ENCODE measurements at regions of chr17 and their contacts with region 1.

Region 1: DNA sequence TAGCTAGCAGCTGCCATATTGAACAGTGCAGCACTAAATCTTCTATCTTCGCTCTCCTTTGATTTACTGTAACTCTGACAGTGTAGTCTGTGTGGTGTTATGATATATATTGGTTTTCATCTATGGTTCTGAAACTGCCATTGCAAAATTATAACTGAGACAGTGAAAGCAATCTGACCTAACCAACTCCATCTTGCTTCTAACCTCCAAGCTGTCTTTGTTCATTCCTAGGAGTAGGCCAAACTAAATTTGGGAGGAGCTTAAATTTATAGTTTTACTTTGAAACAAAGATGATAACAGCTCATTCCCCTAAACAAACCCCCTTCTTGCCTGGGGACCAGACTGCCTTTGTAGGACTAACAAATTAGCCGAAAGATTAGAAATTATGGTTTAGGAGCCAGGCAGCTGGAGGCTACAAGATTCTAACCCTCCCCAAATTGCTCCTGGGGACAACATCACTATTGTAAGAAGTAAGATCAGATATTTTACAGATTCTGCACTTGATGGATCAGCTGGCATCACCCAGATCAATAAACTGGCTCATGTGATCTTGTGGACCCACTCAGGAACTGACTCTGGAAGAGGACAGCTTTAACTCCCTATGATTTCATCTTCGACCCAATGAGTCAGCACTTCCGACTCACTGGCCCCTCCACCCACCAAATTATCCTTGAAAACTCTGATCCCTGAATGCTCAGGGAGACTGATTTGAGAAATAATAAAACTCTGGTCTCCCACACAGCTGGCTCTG is 47.0 kb upstream of the FBXO47 start:
- DNase-seq: no peak
- ATAC-seq: no peak
- H3K4me3 ChIP-seq: no peak overlapping the region
- H3K27ac ChIP-seq: no peak overlapping the region
- H3K4me1 ChIP-seq: no peaks in the 10 kb centered on the region
- H3K27me3 ChIP-seq: no peaks in the 10 kb centered on the region

Region 2: GRCh38 chr17:39099663-39100286 is 85.6 kb after region 1 on chr17:
- intact Hi-C with region 1: loop called in 1 of 2 experiments (anchors 10 kb)
- DNase-seq: no peak
- ATAC-seq: no peak
- H3K4me3 ChIP-seq: no peak overlapping the region
- H3K27ac ChIP-seq: no peak overlapping the region
- H3K4me1 ChIP-seq: no peaks in the 10 kb centered on the region
- H3K27me3 ChIP-seq: no peaks in the 10 kb centered on the region

Region 3: DNA sequence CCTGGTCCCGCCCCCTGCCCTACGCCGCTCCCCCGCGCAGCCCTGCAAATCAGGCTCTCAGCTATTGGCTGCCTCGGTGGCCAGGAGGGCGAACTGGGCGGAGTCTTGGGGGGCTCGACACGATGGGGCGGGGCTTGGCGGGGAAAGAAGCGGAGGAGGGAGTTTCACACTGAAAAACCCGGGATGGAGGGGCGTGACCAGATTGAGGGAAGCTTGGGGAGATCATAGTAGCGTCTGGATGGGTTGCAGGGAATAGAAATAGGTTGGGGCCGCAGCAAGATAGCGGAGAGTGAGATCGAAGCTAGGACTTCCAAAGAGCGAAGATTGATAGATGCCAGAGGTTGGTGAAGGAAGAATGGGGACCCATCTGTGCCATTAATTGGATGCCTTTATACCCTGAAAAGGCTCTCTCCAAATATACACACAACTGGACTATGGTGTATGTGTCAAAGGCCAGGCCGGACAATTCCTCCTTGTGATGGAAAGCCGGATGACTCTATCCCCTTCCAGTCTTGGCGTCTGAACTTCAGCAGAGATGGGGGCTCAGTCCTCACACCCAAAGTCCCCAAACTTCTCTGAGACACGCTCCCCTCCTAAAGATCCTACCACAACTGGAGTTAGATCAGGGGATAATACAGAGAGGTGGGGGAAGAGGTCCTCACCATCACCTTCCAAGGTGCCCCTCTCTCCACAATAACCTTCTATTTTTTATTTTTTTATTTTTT is 211.9 kb after region 1 on chr17:
- intact Hi-C with region 1: no loop called
- DNase-seq: peak; percentile 92 to 97
- ATAC-seq: peak; percentile 85
- H3K4me3 ChIP-seq: peak overlapping the region; percentile 31 to 46
- H3K27ac ChIP-seq: no peak overlapping the region
- H3K4me1 ChIP-seq: no peaks in the 10 kb centered on the region
- H3K27me3 ChIP-seq: no peaks in the 10 kb centered on the region